PC-9 (cell line): ENCODE measurements at regions of chr3 and their contacts with region 1.

Region 1: GRCh38 chr3:30012941-30013543 is 593.4 kb upstream of the TGFBR2 start:
- DNase-seq: peak in 1 of 2 experiments; percentile 55
- H3K4me3 ChIP-seq: no peak overlapping the region
- H3K27ac ChIP-seq: no peak overlapping the region
- H3K4me1 ChIP-seq: no peaks in the 10 kb centered on the region
- H3K27me3 ChIP-seq: no peaks in the 10 kb centered on the region
- CTCF ChIP-seq: peak; percentile 69

Region 2: DNA sequence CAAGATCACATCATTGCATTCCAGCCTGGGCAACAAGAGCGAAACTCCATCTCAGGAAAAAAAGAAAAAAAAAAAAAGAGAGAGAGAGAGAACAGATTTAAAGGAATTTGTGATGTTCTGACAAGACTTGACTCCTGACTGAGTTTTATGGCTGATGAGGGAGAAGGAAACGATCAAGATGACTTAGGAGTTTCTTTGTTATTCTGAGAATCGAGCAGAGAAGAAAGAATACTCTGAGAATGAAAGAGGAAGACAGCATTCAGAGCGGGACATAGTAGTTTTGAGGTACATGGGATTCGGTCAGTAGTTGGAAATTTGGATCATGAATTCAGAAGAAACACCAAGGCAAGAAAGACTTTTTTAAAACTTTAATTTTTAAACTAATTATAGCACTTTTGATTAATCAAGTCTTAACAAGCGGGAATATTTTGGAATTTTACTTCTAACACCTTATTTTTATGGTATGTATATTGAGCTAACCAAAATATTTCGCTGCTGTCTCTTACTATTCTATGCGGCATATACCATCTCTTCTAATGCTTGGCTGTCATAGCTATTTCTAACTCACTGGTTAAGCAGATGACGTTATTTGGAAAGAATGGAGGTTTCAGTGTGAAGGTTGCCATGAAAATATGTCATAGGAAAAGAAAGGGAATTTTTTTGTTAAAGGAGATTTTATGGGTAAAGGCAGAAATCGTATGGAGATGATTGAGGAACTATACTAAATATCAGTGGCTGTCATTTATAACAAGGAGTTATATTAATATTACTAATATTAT is 88.1 kb before region 1 on chr3:
- CTCF ChIA-PET with region 1: no interaction called
- POLR2A ChIA-PET with region 1: no interaction called
- intact Hi-C with region 1: no loop called
- DNase-seq: no peak
- H3K4me3 ChIP-seq: no peak overlapping the region
- H3K27ac ChIP-seq: no peak overlapping the region
- H3K4me1 ChIP-seq: no peaks in the 10 kb centered on the region
- H3K27me3 ChIP-seq: no peaks in the 10 kb centered on the region
- CTCF ChIP-seq: no peak

Region 3: DNA sequence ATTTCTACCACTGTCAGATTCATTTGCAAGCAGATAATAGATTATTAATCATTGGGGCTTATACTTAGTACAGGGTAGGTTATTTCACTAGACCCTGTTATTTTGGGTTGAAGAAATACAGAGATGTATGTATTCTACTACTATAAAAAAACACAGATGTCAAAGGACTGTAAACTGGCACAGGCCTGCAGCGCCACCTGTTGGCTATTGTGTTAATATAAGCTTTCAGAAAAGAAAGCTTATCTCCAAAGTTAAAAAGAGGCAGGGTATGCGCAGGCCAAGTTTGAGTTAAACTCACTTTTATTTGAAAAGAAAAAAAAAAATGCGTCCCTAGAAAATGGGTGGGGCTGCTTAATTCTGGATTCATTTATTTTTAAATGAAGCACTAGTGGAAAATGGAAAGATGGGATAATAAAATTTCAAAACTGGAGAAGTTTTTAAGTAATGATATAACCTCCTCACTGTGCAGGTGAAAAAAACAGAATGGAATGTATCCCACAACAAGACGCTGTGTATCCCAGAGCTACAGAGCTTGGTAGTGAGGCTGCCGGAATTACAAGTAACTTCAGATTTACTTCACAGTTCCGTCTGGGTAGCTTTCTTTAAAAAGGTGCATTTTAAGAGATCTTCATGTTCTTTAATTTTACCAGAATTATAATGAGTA is 186.2 kb after region 1 on chr3:
- CTCF ChIA-PET with region 1: interaction called, 3 read pairs
- POLR2A ChIA-PET with region 1: no interaction called
- intact Hi-C with region 1: loop called (anchors 10 kb)
- DNase-seq: peak in 1 of 2 experiments; percentile 30
- H3K4me3 ChIP-seq: no peak overlapping the region
- H3K27ac ChIP-seq: no peak overlapping the region
- H3K4me1 ChIP-seq: no peaks in the 10 kb centered on the region
- H3K27me3 ChIP-seq: no peaks in the 10 kb centered on the region
- CTCF ChIP-seq: peak; percentile 78

Region 4: DNA sequence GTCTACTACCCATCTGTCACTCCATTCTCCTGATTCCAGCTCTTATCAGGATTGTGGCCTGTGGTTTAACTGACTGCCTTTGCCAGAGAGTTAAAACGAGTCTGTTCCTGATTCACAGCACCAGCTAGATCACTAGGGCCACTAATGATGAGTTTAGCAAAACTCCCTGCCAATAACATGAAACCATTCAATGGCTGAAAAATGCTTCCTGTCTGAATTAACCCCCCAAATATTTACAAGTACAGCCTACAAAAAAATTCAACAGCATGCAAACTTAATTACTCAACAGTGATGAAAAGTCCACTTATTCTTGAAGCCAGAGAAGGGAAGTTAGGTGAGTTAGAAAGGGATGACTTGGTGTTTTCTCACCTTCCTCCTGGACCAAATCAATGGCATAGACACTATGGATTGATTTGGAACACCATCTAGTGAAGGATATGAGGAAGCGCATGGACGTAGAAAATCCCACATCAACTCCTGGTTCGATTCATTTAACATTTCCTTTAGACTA is 734.8 kb after region 1 on chr3:
- CTCF ChIA-PET with region 1: no interaction called
- POLR2A ChIA-PET with region 1: no interaction called
- intact Hi-C with region 1: loop called (anchors 2 kb)
- DNase-seq: peak in 1 of 2 experiments; percentile 57
- H3K4me3 ChIP-seq: no peak overlapping the region
- H3K27ac ChIP-seq: no peak overlapping the region
- H3K4me1 ChIP-seq: peaks cover 8% of the 10 kb centered on the region; the same call in 1 of the 2 replicates
- H3K27me3 ChIP-seq: no peaks in the 10 kb centered on the region
- CTCF ChIP-seq: peak; percentile 32; the same call in 1 of the 2 replicates

Region 5: GRCh38 chr3:31132132-31132769 is 1119.2 kb after region 1 on chr3:
- CTCF ChIA-PET with region 1: no interaction called
- POLR2A ChIA-PET with region 1: no interaction called
- intact Hi-C with region 1: loop called (anchors 10 kb)
- DNase-seq: peak in 1 of 2 experiments; percentile 36
- H3K4me3 ChIP-seq: no peak overlapping the region
- H3K27ac ChIP-seq: no peak overlapping the region
- H3K4me1 ChIP-seq: no peaks in the 10 kb centered on the region
- H3K27me3 ChIP-seq: no peaks in the 10 kb centered on the region
- CTCF ChIP-seq: peak; percentile 66